Posterior vena cava (tissue), 2 donors: ENCODE measurements at regions of chr20 and their contacts with region 1.

Region 1: GRCh38 chr20:33731693-33732165 is at the start of gene ZNF341:
- DNase-seq: peak; percentile 97
- total RNA-seq, gene ZNF341: 1.8 to 2.0 TPM

Region 2: GRCh38 chr20:33666293-33667244 is 65.2 kb before region 1 on chr20 and contains the start of gene ACTL10:
- intact Hi-C with region 1: loop called in 1 of 2 experiments (anchors 5 kb)
- DNase-seq: peak; percentile 100
- total RNA-seq, gene ACTL10: 1.2 to 1.4 TPM